ENCODE measurements at regions of chr4 and their contacts with region 1.

Region 1: GRCh38 chr4:180953572-180953971 is 1289.6 kb upstream of the TENM3 start:
- DNase-seq: peak; percentile 18 to 30
- H3K4me3 ChIP-seq: no peak overlapping the region
- H3K4me3 Mint-ChIP-seq: no peak overlapping the region
- H3K27ac Mint-ChIP-seq: no peak overlapping the region
- H3K4me1 ChIP-seq: no peaks in the 10 kb centered on the region
- H3K4me1 Mint-ChIP-seq: no peaks in the 10 kb centered on the region
- H3K27me3 ChIP-seq: no peaks in the 10 kb centered on the region
- H3K27me3 Mint-ChIP-seq: no peaks in the 10 kb centered on the region
- CTCF ChIP-seq: peak in 1 of 2 experiments; percentile 48

Region 2: GRCh38 chr4:180828440-180829018 is 125.0 kb before region 1 on chr4:
- CTCF ChIA-PET with region 1: no interaction called
- POLR2A ChIA-PET with region 1: no interaction called
- intact Hi-C with region 1: loop called (anchors 5 kb)
- DNase-seq: peak in 1 of 2 experiments; percentile 17
- H3K4me3 ChIP-seq: no peak overlapping the region
- H3K4me3 Mint-ChIP-seq: no peak overlapping the region
- H3K27ac Mint-ChIP-seq: no peak overlapping the region
- H3K4me1 ChIP-seq: no peaks in the 10 kb centered on the region
- H3K4me1 Mint-ChIP-seq: no peaks in the 10 kb centered on the region
- H3K27me3 ChIP-seq: no peaks in the 10 kb centered on the region
- H3K27me3 Mint-ChIP-seq: peaks cover 9% of the 10 kb centered on the region
- CTCF ChIP-seq: peak; percentile 51 to 54

Region 3: GRCh38 chr4:180967936-180968335 is 14.4 kb after region 1 on chr4:
- CTCF ChIA-PET with region 1: no interaction called
- POLR2A ChIA-PET with region 1: no interaction called
- intact Hi-C with region 1: no loop called
- DNase-seq: no peak
- H3K4me3 ChIP-seq: no peak overlapping the region
- H3K4me3 Mint-ChIP-seq: no peak overlapping the region
- H3K27ac Mint-ChIP-seq: no peak overlapping the region
- H3K4me1 ChIP-seq: no peaks in the 10 kb centered on the region
- H3K4me1 Mint-ChIP-seq: no peaks in the 10 kb centered on the region
- H3K27me3 ChIP-seq: no peaks in the 10 kb centered on the region
- H3K27me3 Mint-ChIP-seq: peaks cover 16% of the 10 kb centered on the region
- CTCF ChIP-seq: no peak

Region 4: GRCh38 chr4:181008164-181008563 is 54.6 kb after region 1 on chr4:
- CTCF ChIA-PET with region 1: no interaction called
- POLR2A ChIA-PET with region 1: no interaction called
- intact Hi-C with region 1: no loop called
- DNase-seq: no peak
- H3K4me3 ChIP-seq: no peak overlapping the region
- H3K4me3 Mint-ChIP-seq: no peak overlapping the region
- H3K27ac Mint-ChIP-seq: no peak overlapping the region
- H3K4me1 ChIP-seq: no peaks in the 10 kb centered on the region
- H3K4me1 Mint-ChIP-seq: no peaks in the 10 kb centered on the region
- H3K27me3 ChIP-seq: no peaks in the 10 kb centered on the region
- H3K27me3 Mint-ChIP-seq: no peaks in the 10 kb centered on the region
- CTCF ChIP-seq: no peak

Measured in Caco-2 (cell line).